ENCODE measurements at regions of chr1 and their contacts with region 1.

Region 1: DNA sequence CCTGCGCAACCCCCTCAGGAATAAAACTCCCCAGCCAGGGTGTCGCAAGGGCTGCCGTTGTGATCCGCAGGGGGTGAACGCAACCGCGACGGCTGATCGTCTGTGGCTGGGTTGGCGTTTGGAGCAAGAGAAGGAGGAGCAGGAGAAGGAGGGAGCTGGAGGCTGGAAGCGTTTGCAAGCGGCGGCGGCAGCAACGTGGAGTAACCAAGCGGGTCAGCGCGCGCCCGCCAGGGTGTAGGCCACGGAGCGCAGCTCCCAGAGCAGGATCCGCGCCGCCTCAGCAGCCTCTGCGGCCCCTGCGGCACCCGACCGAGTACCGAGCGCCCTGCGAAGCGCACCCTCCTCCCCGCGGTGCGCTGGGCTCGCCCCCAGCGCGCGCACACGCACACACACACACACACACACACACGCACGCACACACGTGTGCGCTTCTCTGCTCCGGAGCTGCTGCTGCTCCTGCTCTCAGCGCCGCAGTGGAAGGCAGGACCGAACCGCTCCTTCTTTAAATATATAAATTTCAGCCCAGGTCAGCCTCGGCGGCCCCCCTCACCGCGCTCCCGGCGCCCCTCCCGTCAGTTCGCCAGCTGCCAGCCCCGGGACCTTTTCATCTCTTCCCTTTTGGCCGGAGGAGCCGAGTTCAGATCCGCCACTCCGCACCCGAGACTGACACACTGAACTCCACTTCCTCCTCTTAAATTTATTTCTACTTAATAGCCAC is 696 bp downstream of the TGFB2 start:
- DNase-seq: peak in 1 of 2 experiments; percentile 83
- ATAC-seq: peak; percentile 72 to 78
- H3K4me3 ChIP-seq: peak overlapping the region; percentile 83
- H3K27ac ChIP-seq: peak overlapping the region; percentile 96 to 97
- H3K4me1 ChIP-seq: peaks cover 40% of the 10 kb centered on the region
- CTCF ChIP-seq: no peak
- EP300 ChIP-seq: no peak
- POLR2A ChIP-seq: peak; percentile 63
- RAD21 ChIP-seq: peak in 1 of 2 experiments; percentile 27; a peak in 3 of 5 replicates

Region 2: GRCh38 chr1:218371927-218372672 is 26.3 kb after region 1 on chr1:
- CTCF ChIA-PET with region 1: interaction called, 3 read pairs
- POLR2A ChIA-PET with region 1: interaction called, 37 read pairs
- DNase-seq: no peak
- ATAC-seq: no peak
- H3K4me3 ChIP-seq: no peak overlapping the region
- H3K27ac ChIP-seq: peak overlapping the region; percentile 90 to 92
- H3K4me1 ChIP-seq: peaks cover 96% of the 10 kb centered on the region
- CTCF ChIP-seq: no peak
- EP300 ChIP-seq: no peak
- POLR2A ChIP-seq: no peak
- RAD21 ChIP-seq: no peak

Region 3: DNA sequence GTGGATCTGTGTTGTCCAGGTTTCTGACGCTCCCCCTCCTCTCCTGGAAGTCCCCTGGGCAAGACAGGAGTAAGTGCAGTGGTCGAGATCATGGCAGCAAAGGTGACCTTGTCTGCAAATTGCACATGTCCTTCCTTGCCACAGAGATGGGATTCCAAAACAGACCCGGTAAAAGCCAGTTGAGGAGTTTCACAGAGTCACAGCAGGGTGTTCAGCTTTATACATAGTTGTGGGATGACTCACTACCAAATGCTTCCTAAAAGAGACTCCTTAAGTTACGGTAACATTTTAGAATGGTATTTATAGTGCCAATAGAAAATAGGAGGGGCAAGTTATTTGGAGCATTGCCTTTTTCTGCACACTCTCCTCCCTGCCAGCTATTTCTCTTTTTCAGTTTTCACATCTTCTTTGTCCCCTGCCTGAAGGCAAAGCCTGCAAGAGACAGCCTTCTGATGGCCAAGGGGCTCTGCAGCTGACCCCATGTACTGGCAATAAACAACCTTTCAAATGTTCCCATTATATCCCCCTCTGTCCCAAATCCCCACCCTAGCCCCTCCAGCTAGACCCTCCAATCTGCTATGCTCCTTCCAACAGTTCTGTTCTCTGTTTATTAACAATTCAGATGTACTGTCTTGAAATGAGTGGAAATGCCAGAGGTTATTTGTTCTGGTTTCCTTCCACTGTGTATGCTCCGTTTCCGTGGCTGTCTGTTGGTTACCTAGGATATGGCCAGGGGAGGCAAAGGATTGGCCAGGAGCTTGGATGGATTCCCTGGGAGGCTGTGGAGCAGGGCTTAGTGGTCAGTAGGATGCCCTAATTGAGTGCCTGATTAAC is 114.3 kb after region 1 on chr1:
- CTCF ChIA-PET with region 1: interaction called, 5 read pairs
- POLR2A ChIA-PET with region 1: interaction called, 10 read pairs
- DNase-seq: peak; percentile 78 to 84
- ATAC-seq: peak; percentile 90 to 92
- H3K4me3 ChIP-seq: 0 out of 3 replicates have a peak overlapping the region, but pooled peaks have one; percentile 10
- H3K27ac ChIP-seq: peak overlapping the region; percentile 78 to 92
- H3K4me1 ChIP-seq: peaks cover 50% of the 10 kb centered on the region
- CTCF ChIP-seq: no peak
- EP300 ChIP-seq: peak in 1 of 2 experiments; percentile 31; a peak in 2 of 5 replicates
- POLR2A ChIP-seq: no peak
- RAD21 ChIP-seq: peak; percentile 17 to 42; a peak in 4 of 5 replicates

Region 4: GRCh38 chr1:218499011-218499691 is 153.3 kb after region 1 on chr1:
- CTCF ChIA-PET with region 1: interaction called, 3 read pairs
- POLR2A ChIA-PET with region 1: interaction called, 28 read pairs
- DNase-seq: peak in 1 of 2 experiments; percentile 86
- ATAC-seq: peak; percentile 54 to 70
- H3K4me3 ChIP-seq: peak overlapping the region; percentile 27
- H3K27ac ChIP-seq: peak overlapping the region; percentile 92 to 93
- H3K4me1 ChIP-seq: peaks cover 44% of the 10 kb centered on the region
- CTCF ChIP-seq: no peak
- EP300 ChIP-seq: peak in 1 of 2 experiments; percentile 15; a peak in 1 of 5 replicates
- POLR2A ChIP-seq: no peak
- RAD21 ChIP-seq: no peak

Region 5: DNA sequence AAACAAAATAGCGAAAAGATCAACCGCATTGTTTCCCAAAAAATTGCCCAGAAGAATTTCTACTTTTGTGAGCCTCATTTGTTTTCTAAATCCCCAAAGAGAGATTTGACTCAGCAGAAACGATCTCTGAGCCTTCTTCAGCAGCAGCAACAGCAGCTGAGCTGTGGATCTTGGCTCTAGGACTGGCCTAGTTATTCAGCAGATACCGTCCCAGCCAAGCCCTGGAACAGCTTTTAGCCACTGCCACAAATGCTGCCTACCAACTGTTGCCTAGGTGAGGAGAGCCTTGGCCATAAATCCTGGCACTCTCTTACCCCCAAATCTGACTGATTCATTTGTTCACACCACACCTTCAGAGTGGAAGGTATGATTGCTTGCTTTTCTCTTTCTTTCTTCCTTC is 319.4 kb after region 1 on chr1:
- CTCF ChIA-PET with region 1: no interaction called
- POLR2A ChIA-PET with region 1: no interaction called
- DNase-seq: peak; percentile 53 to 83
- ATAC-seq: peak; percentile 89 to 90
- H3K4me3 ChIP-seq: no peak overlapping the region
- H3K27ac ChIP-seq: peak overlapping the region; percentile 86 to 91
- H3K4me1 ChIP-seq: peaks cover 38% of the 10 kb centered on the region
- CTCF ChIP-seq: no peak
- EP300 ChIP-seq: no peak
- POLR2A ChIP-seq: no peak
- RAD21 ChIP-seq: peak in 1 of 2 experiments; percentile 15; a peak in 1 of 5 replicates

Region 6: GRCh38 chr1:219566951-219567947 is 1221.4 kb after region 1 on chr1:
- CTCF ChIA-PET with region 1: interaction called, 3 read pairs
- POLR2A ChIA-PET with region 1: interaction called, 10 read pairs
- DNase-seq: peak in 1 of 2 experiments; percentile 69
- ATAC-seq: peak; percentile 77 to 88; a peak in 5 of 6 replicates
- H3K4me3 ChIP-seq: no peak overlapping the region
- H3K27ac ChIP-seq: peak overlapping the region; percentile 23 to 71; a peak in 4 of 6 replicates
- H3K4me1 ChIP-seq: peaks cover 25% of the 10 kb centered on the region
- CTCF ChIP-seq: peak; percentile 88
- EP300 ChIP-seq: no peak
- POLR2A ChIP-seq: no peak
- RAD21 ChIP-seq: peak; percentile 92 to 93

Measured in A549 (cell line).